ENCODE measurements at regions of chr7 and their contacts with region 1.

Region 1: GRCh38 chr7:115230882-115231571 is 309.1 kb downstream of the MDFIC start:
- DNase-seq: no peak
- H3K4me3 Mint-ChIP-seq: no peak overlapping the region
- H3K27ac Mint-ChIP-seq: no peak overlapping the region
- H3K4me1 Mint-ChIP-seq: peaks cover 29% of the 10 kb centered on the region
- H3K27me3 Mint-ChIP-seq: no peaks in the 10 kb centered on the region

Region 2: DNA sequence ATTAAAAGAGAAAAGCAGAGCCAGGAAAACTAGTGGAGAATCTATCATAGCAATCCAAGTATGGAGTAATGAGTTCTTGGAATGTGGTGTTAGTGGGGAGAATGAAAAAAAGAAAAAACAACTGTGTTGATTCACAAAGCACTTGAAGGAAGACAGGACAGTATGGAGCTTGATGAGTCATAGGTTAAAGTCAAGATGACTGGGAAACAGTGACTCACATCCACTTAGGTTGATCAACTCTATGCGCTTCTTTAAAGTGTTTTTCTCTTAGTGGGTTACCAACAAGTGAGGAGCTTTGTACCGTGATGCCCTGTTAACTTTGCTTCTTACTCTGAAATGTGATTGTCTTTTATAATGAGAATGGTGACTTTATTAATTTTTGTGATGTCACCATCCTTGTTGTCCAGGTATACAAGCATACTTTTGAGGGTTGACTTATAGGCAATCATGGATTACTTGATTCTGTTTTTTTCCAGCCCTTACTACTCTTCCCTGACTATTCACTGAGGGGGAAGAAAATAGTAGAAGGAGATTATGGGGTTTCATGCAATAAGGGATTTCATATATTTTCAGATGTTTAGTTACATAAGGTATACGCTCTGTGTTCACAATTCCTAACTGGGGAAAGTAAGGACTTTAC is 341.3 kb before region 1 on chr7:
- CTCF ChIA-PET with region 1: no interaction called
- POLR2A ChIA-PET with region 1: no interaction called
- intact Hi-C with region 1: loop called (anchors 5 kb)
- DNase-seq: no peak
- H3K4me3 Mint-ChIP-seq: peak overlapping the region; percentile 10
- H3K27ac Mint-ChIP-seq: peak overlapping the region; percentile 83
- H3K4me1 Mint-ChIP-seq: peaks cover 31% of the 10 kb centered on the region
- H3K27me3 Mint-ChIP-seq: no peaks in the 10 kb centered on the region

Region 3: GRCh38 chr7:114916261-114916892 is 314.6 kb before region 1 on chr7:
- CTCF ChIA-PET with region 1: no interaction called
- POLR2A ChIA-PET with region 1: no interaction called
- intact Hi-C with region 1: loop called (anchors 1 kb)
- DNase-seq: peak; percentile 69
- H3K4me3 Mint-ChIP-seq: peak overlapping the region; percentile 38
- H3K27ac Mint-ChIP-seq: peak overlapping the region; percentile 90
- H3K4me1 Mint-ChIP-seq: peaks cover 57% of the 10 kb centered on the region
- H3K27me3 Mint-ChIP-seq: no peaks in the 10 kb centered on the region

Region 4: GRCh38 chr7:115145512-115145911 is 85.5 kb before region 1 on chr7:
- CTCF ChIA-PET with region 1: no interaction called
- POLR2A ChIA-PET with region 1: no interaction called
- intact Hi-C with region 1: loop called (anchors 5 kb)
- DNase-seq: no peak
- H3K4me3 Mint-ChIP-seq: no peak overlapping the region
- H3K27ac Mint-ChIP-seq: no peak overlapping the region
- H3K4me1 Mint-ChIP-seq: peaks cover 10% of the 10 kb centered on the region
- H3K27me3 Mint-ChIP-seq: no peaks in the 10 kb centered on the region

Region 5: GRCh38 chr7:115249080-115249479 is 18.1 kb after region 1 on chr7:
- CTCF ChIA-PET with region 1: no interaction called
- POLR2A ChIA-PET with region 1: no interaction called
- intact Hi-C with region 1: no loop called
- DNase-seq: no peak
- H3K4me3 Mint-ChIP-seq: no peak overlapping the region
- H3K27ac Mint-ChIP-seq: no peak overlapping the region
- H3K4me1 Mint-ChIP-seq: peaks cover 3% of the 10 kb centered on the region
- H3K27me3 Mint-ChIP-seq: no peaks in the 10 kb centered on the region

Region 6: GRCh38 chr7:116211006-116211912 is 980.2 kb after region 1 on chr7:
- CTCF ChIA-PET with region 1: no interaction called
- POLR2A ChIA-PET with region 1: no interaction called
- intact Hi-C with region 1: loop called (anchors 5 kb)
- DNase-seq: peak; percentile 86
- H3K4me3 Mint-ChIP-seq: peak overlapping the region; percentile 96
- H3K27ac Mint-ChIP-seq: peak overlapping the region; percentile 99
- H3K4me1 Mint-ChIP-seq: peaks cover 55% of the 10 kb centered on the region
- H3K27me3 Mint-ChIP-seq: no peaks in the 10 kb centered on the region